Activated B cell treated with CpG ODN at 0.5 μM for 24 hours (primary cell): ENCODE measurements at regions of chr1 and their contacts with region 1.

Region 1: DNA sequence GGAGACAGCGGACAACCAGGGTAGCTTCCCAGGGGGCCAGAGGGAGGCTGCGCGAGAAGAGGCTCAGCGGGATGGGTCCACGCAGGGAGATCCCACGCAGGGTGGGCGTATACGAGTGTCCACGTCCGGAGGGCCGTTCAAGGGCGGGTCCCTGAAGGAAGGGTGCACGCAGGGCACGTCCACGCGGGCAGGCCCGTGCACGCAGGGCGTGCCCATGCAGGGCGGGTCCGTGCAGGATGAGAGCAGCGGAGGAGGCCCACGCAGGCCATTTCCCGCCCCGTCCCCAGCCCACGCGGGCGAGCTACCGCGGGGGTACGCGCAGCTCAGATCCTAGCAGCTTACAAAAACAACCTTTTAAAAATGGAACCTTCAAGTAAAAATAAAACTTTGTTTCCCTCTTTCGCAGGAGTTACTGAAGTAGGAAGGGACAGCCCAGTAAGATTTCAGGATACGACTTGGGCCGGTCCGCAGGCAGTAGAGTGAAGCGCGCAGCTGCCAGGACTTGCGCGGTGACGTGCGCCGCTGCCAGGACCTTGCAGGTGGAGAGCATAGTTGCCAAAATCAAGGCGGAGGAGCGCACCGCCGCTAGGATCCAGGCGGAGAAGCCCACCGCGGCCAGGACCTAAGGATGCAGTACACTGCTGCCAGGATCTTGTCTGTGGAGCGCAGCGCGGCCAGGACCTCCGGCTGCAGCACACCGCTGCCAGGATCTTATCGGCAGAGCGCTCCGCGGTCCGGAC is 416 bp upstream of the RNF187 start:
- DNase-seq: peak; percentile 65
- ATAC-seq: peak; percentile 64
- H3K4me3 Mint-ChIP-seq: peak overlapping the region; percentile 94
- H3K27ac Mint-ChIP-seq: peak overlapping the region; percentile 100
- H3K4me1 Mint-ChIP-seq: peaks cover 38% of the 10 kb centered on the region
- H3K27me3 Mint-ChIP-seq: no peaks in the 10 kb centered on the region
- CTCF ChIP-seq: no peak

Region 2: GRCh38 chr1:227787513-227788270 is 699.1 kb before region 1 on chr1:
- CTCF ChIA-PET with region 1: no interaction called
- POLR2A ChIA-PET with region 1: interaction called, 3 read pairs
- intact Hi-C with region 1: loop called (anchors 2 kb)
- DNase-seq: peak; percentile 83
- ATAC-seq: peak; percentile 93
- H3K4me3 Mint-ChIP-seq: peak overlapping the region; percentile 86
- H3K27ac Mint-ChIP-seq: peak overlapping the region; percentile 61
- H3K4me1 Mint-ChIP-seq: peaks cover 22% of the 10 kb centered on the region
- H3K27me3 Mint-ChIP-seq: no peaks in the 10 kb centered on the region
- CTCF ChIP-seq: no peak

Region 3: DNA sequence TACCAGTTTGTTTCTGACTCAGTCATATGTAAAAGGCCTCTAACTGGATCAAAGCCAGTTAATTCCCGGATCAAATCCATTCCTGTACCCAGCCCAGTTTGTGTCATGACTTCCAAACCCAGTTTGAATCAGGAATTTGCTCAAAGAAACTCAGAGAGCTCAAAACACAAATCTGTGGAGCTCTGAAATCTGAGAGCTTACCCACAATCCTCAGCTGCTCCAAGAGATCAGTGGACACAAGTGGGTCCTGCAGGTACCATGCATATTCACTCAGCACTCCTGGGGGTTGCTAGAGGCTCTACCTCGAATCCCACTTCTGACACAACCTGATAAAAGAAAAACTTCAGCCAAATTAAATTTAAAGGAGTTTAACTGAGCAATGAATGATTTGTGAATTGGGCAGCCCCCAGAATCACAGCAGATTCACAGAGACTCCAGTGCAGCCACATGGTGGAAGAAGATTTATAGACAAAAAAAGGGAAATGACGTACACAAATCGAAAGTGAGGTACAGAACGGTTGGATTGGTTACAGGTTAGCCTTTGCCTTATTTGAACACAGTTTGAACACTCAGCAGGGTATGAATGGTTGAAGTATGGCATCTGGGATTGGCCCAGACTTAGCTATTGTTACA is 365.8 kb before region 1 on chr1:
- CTCF ChIA-PET with region 1: no interaction called
- POLR2A ChIA-PET with region 1: interaction called, 12 read pairs
- intact Hi-C with region 1: no loop called
- DNase-seq: no peak
- ATAC-seq: peak; percentile 57
- H3K4me3 Mint-ChIP-seq: peak overlapping the region; percentile 38
- H3K27ac Mint-ChIP-seq: no peak overlapping the region
- H3K4me1 Mint-ChIP-seq: peaks cover 9% of the 10 kb centered on the region
- H3K27me3 Mint-ChIP-seq: no peaks in the 10 kb centered on the region
- CTCF ChIP-seq: no peak

Region 4: DNA sequence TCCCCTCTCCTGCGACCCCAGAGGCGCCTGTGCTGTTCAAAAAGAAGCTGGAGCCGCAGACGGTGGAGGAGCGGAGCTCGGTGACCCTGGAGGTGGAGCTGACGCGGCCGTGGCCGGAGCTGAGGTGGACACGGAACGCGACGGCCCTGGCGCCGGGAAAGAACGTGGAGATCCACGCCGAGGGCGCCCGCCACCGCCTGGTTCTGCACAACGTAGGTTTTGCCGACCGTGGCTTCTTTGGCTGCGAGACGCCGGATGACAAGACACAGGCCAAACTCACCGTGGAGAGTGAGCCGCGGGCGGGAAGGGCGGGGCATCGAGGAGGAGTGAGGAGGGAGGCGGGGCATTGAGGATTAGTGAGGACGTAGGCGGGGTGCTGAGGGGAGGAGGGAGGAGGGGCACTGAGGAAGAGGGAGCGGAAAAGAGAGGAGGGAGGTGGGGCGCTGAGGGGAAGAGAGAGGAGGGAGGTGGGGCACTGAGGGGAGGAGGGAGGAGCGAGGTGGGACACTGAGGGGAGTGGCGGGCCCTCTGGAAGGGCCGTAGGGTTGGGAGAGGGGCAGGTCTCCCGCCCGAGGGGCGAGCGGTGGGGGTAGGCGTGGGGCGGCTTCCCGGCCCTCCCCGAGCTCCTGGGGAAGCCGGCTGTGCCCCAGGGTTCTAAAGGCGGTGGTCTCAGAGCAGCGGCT is 210.9 kb before region 1 on chr1:
- CTCF ChIA-PET with region 1: no interaction called
- POLR2A ChIA-PET with region 1: interaction called, 3 read pairs
- intact Hi-C with region 1: loop called (anchors 1 kb)
- DNase-seq: peak; percentile 66
- ATAC-seq: peak; percentile 98
- H3K4me3 Mint-ChIP-seq: peak overlapping the region; percentile 82
- H3K27ac Mint-ChIP-seq: no peak overlapping the region
- H3K4me1 Mint-ChIP-seq: peaks cover 8% of the 10 kb centered on the region
- H3K27me3 Mint-ChIP-seq: no peaks in the 10 kb centered on the region
- CTCF ChIP-seq: no peak

Region 5: GRCh38 chr1:228464487-228464983 is 22.2 kb before region 1 on chr1:
- CTCF ChIA-PET with region 1: interaction called, 3 read pairs
- POLR2A ChIA-PET with region 1: interaction called, 7 read pairs
- intact Hi-C with region 1: loop called (anchors 2 kb)
- DNase-seq: peak; percentile 39
- ATAC-seq: peak; percentile 91
- H3K4me3 Mint-ChIP-seq: peak overlapping the region; percentile 75
- H3K27ac Mint-ChIP-seq: peak overlapping the region; percentile 68
- H3K4me1 Mint-ChIP-seq: peaks cover 24% of the 10 kb centered on the region
- H3K27me3 Mint-ChIP-seq: peaks cover 74% of the 10 kb centered on the region
- CTCF ChIP-seq: no peak

Region 6: DNA sequence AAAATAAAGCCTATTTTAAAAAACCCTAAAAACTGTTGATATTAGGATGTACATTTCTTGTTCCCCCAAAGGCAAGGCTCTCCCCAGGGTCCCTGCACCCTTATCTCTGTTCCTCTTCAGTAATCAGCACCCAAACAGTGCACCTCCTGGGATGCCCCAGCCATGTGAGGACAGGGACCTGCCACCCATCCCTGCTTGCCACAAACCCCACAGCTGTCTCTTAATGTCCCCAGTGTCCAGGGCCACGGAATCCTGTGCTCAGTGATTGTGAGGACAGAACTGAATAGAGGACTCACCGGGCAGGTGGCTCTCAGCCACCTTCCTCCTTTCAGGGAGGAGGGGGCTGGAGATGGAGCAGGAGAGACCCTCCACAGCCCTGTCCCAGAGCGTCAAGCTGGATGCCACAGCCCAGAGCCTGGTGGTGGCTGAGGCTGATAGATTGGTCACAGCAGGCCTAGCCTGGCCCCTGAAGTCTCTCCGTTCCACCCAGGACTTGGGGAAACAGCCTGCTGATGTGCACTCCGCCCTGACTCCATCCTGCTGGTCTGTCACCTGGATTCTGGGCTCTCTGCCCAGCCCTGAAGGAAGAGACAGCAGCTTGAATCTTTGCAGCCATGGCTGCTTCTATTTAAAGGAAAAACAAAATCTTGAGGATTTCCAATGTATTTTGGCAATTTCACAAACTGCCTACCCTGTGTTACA is 23.5 kb after region 1 on chr1:
- CTCF ChIA-PET with region 1: no interaction called
- POLR2A ChIA-PET with region 1: no interaction called
- intact Hi-C with region 1: no loop called
- DNase-seq: no peak
- ATAC-seq: no peak
- H3K4me3 Mint-ChIP-seq: no peak overlapping the region
- H3K27ac Mint-ChIP-seq: no peak overlapping the region
- H3K4me1 Mint-ChIP-seq: no peaks in the 10 kb centered on the region
- H3K27me3 Mint-ChIP-seq: peaks cover 17% of the 10 kb centered on the region
- CTCF ChIP-seq: no peak

Region 7: GRCh38 chr1:228871314-228872061 is 384.7 kb after region 1 on chr1:
- CTCF ChIA-PET with region 1: no interaction called
- POLR2A ChIA-PET with region 1: no interaction called
- intact Hi-C with region 1: no loop called
- DNase-seq: no peak
- ATAC-seq: no peak
- H3K4me3 Mint-ChIP-seq: no peak overlapping the region
- H3K27ac Mint-ChIP-seq: no peak overlapping the region
- H3K4me1 Mint-ChIP-seq: no peaks in the 10 kb centered on the region
- H3K27me3 Mint-ChIP-seq: no peaks in the 10 kb centered on the region
- CTCF ChIP-seq: no peak